ENCODE measurements at regions of chr5 and their contacts with region 1.

Region 1: DNA sequence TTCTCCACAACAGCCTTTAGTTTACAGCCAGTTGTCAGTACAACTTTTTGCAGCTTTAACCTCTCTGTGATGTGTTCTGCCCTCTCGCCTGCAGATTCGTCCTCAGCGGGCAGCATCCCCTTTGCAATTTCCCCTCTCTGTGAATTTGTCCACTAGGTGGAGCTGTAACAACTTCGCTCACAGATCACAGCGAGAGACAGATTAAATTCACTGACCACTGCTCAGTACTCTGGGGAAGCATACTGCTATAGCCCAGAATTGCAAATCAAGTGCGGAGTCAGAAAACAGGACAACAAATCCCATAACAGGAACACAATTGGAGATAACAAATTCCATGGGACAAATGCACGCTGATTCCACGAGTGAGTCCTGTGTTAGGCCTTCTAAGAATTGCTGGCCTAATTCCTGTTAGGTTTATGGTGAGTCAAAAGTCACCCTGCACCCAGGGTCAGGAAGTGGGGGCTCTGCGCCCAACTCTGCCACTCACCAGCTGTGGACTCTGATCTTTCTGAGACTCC is 2124.9 kb downstream of the MAT2B start:
- H3K4me3 ChIP-seq: no peak overlapping the region
- H3K27ac ChIP-seq: no peak overlapping the region
- H3K4me1 ChIP-seq: no peaks in the 10 kb centered on the region
- CTCF ChIP-seq: peak; percentile 47; the same call in 1 of the 2 replicates

Region 2: DNA sequence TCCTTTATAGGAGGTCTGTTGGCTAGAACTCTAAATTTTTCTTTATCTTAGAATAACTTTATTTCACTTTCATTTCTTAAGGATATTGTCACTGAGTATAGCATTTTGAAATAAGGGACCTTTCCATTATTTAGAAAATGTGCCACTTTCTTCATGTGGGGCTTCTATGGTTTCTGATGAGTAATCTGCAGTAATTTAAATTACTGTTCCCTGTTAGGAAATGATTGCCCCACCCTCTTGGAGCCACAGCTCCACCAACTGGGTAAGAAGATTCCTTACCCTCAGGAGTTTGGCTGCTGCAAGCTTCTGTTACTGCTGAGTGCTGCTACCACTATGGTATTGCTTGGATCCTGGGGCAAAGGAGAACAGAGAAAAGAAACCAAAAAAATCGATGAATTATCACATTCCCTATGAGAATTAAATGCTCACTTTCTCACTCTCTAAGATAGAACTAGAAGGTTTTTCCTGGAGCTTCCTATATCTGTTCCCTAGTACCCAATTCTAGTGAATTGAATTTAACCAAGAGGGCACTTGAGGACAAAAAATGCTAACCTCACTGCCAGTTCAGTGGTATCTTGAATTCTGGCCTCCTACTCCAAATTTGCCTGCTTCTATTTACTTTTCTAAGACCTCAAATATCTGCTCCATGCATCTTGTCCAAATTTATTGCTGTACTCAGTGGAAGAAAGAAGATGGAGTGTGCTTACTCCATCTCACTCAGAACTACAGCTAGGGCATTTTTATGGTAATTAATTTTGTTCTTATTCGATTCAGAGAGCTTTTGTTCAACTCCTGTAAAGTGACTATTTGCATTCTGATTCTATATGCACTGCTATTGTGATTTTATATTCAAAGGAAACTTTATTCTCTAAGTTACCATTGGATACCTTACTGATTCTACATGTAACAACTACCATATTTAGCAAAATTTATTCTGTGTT is 13.6 kb before region 1 on chr5:
- CTCF ChIA-PET with region 1: interaction called, 11 read pairs
- POLR2A ChIA-PET with region 1: no interaction called
- H3K4me3 ChIP-seq: no peak overlapping the region
- H3K27ac ChIP-seq: no peak overlapping the region
- H3K4me1 ChIP-seq: no peaks in the 10 kb centered on the region
- CTCF ChIP-seq: no peak

Region 3: GRCh38 chr5:165665735-165666400 is 35.5 kb after region 1 on chr5:
- CTCF ChIA-PET with region 1: interaction called, 10 read pairs
- POLR2A ChIA-PET with region 1: no interaction called
- H3K4me3 ChIP-seq: no peak overlapping the region
- H3K27ac ChIP-seq: no peak overlapping the region
- H3K4me1 ChIP-seq: no peaks in the 10 kb centered on the region
- CTCF ChIP-seq: no peak

Region 4: DNA sequence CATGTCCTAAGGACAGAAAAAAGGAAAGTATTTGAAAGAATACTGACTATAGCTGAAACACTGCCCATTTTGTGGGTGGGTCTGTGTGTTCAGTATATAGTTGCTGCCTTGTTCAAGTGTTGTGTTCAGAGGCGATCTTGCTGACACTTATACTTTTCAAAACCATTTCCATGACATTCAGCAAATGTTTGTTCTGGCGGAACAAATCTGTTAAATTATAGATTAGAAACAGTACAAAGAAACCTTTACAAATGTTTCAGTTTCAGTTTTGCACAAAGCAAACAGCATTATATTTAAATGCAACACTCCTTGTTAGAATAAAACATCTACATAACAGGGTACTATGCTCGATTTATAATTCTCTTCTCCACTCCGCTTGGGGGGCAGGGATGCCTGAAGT is 151.4 kb after region 1 on chr5:
- CTCF ChIA-PET with region 1: no interaction called
- POLR2A ChIA-PET with region 1: no interaction called
- H3K4me3 ChIP-seq: no peak overlapping the region
- H3K27ac ChIP-seq: no peak overlapping the region
- H3K4me1 ChIP-seq: no peaks in the 10 kb centered on the region
- CTCF ChIP-seq: no peak